Panc1 (cell line): ENCODE measurements at regions of chr1 and their contacts with region 1.

Region 1: GRCh38 chr1:10678402-10678801 is 118.0 kb downstream of the CASZ1 start:
- DNase-seq: no peak
- ATAC-seq: no peak
- H3K4me3 ChIP-seq: no peak overlapping the region
- H3K27ac ChIP-seq: no peak overlapping the region
- H3K4me1 ChIP-seq: peaks cover 31% of the 10 kb centered on the region
- H3K27me3 ChIP-seq: no peaks in the 10 kb centered on the region
- CTCF ChIP-seq: no peak

Region 2: DNA sequence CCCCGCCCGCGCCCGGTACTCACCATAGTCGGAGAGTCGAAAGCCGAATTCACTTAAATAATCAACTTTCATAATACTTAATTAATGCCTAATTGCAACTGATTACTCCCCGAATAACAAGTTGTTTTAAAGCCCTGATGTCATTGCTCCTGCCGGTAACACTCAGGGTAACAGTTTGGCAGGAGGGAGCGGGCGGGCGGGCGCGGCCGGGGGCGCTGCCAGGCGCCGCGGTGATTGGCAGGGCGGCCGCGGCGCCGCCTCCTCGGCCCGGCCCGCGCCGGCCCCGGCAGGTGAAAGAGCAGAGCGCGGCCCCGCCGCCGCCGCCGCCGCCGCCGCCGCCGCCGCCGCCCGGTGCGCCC is 15.9 kb after region 1 on chr1:
- CTCF ChIA-PET with region 1: no interaction called
- POLR2A ChIA-PET with region 1: no interaction called
- in situ Hi-C with region 1: no loop called
- intact Hi-C with region 1: no loop called
- DNase-seq: no peak
- ATAC-seq: peak; percentile 79
- H3K4me3 ChIP-seq: peak overlapping the region; percentile 62
- H3K27ac ChIP-seq: no peak overlapping the region
- H3K4me1 ChIP-seq: peaks cover 26% of the 10 kb centered on the region
- H3K27me3 ChIP-seq: no peaks in the 10 kb centered on the region
- CTCF ChIP-seq: no peak

Region 3: GRCh38 chr1:10781131-10781530 is 102.7 kb after region 1 on chr1:
- CTCF ChIA-PET with region 1: interaction called, 14 read pairs
- POLR2A ChIA-PET with region 1: no interaction called
- in situ Hi-C with region 1: no loop called
- intact Hi-C with region 1: no loop called
- DNase-seq: no peak
- ATAC-seq: no peak
- H3K4me3 ChIP-seq: no peak overlapping the region
- H3K27ac ChIP-seq: peak overlapping the region; percentile 50
- H3K4me1 ChIP-seq: peaks cover 31% of the 10 kb centered on the region
- H3K27me3 ChIP-seq: no peaks in the 10 kb centered on the region
- CTCF ChIP-seq: no peak